K562 (cell line): ENCODE measurements at regions of chr6 and their contacts with region 1.

Region 1: DNA sequence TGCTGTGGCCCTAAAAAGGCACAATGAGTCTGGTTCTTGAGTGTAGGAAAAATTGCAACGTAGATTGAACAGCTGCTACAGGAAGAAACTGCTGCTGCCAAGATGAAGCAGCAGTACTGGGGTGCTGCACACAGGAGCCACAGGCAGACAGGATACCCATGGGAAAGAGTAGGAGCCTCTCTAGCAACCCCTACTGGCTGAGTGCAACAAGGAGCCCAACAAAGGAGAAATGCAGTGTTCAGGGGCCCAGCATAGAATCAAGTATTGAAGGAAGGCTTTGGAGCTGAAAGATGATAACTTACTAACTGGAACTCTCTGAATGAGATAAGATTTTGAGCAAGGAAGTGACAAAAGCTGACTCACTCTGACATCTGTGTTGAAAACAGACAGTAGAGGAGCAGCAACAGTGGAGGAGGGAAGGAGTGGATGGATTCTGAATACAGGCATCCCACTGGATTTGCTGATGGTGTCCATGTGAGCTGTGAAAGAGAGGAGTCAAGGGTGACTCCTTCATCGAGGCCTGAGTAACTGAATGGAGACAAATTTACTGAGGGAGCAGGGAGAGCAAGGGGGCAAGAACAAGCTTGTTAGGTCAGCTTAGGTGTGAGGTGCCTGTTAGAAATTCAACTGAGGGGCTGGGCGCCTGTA is 534.7 kb upstream of the JARID2 start:
- DNase-seq: peak; percentile 71 to 94 (median 82)
- ATAC-seq: peak; percentile 89
- H3K4me3 ChIP-seq: no peak overlapping the region
- H3K27ac ChIP-seq: peak overlapping the region; percentile 91
- H3K4me1 ChIP-seq: peaks cover 28 to 63% of the 10 kb centered on the region in 2 experiments
- H3K27me3 ChIP-seq: no peaks in the 10 kb centered on the region
- CTCF ChIP-seq: peak; percentile 74 to 88 (median 80)
- EP300 ChIP-seq: peak; percentile 97
- POLR2A ChIP-seq: peak; percentile 71
- RAD21 ChIP-seq: peak; percentile 89 to 91

Region 2: DNA sequence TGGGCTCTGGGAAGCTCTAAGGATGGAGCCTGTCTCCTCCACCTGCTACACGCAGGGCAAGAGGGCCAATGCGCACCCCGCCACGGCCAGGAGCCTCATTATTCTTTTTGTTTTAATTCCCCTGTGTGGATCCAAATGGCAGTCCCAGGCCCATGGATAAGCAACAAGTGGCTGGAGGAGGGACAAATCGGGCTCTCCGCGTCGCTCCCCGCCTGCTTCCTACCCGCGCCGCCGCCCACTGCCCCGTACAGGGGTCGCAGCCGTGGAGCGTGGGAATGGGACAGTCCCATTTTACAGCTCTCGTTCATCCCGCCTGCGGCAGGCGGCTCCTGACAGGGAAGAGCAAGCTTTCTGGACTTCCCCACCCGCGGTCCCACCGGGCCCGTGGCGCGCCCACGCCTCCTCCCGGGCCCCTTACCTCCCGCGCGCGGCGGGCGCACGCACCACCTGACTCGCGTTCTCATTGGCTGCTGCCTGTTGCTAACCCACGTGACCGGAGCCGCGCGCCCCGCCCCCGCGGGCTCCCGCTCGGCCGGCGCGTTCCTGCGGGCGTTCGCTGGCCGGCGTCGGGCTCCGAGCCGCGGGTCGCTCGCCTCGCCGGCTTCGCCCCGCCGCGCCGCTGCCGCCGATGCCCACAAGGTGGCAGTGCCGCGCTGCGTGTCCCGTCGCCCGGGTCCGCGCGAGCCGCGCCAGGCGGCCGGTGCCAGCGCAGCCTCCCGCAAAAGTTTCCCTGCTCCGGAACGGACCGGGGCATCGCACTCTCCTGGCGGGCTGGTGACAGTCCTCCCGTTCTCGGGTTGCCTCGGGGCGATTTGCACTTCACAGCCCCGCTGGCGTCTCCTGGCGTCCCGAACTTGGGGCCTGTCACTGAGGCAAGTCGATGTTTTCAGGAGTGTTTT is 500.3 kb before region 1 on chr6:
- CTCF ChIA-PET with region 1: no interaction called
- POLR2A ChIA-PET with region 1: no interaction called
- in situ Hi-C with region 1: no loop called
- intact Hi-C with region 1: loop called (anchors 5 kb)
- DNase-seq: peak; percentile 97 to 100 (median 98)
- ATAC-seq: peak; percentile 99
- H3K4me3 ChIP-seq: peak overlapping the region; percentile 67
- H3K27ac ChIP-seq: 0 out of 3 replicates have a peak overlapping the region, but pooled peaks have one; percentile 49
- H3K4me1 ChIP-seq: peaks cover 13 to 17% of the 10 kb centered on the region in 2 experiments
- H3K27me3 ChIP-seq: peaks cover 4 to 15% of the 10 kb centered on the region in 2 experiments; a peak in 4 of 5 replicates
- CTCF ChIP-seq: peak; percentile 55 to 93 (median 81); a peak in 5 of 6 replicates
- EP300 ChIP-seq: no peak; the same call in 1 of the 2 replicates
- POLR2A ChIP-seq: peak; percentile 72
- RAD21 ChIP-seq: peak; percentile 94 to 98

Region 3: DNA sequence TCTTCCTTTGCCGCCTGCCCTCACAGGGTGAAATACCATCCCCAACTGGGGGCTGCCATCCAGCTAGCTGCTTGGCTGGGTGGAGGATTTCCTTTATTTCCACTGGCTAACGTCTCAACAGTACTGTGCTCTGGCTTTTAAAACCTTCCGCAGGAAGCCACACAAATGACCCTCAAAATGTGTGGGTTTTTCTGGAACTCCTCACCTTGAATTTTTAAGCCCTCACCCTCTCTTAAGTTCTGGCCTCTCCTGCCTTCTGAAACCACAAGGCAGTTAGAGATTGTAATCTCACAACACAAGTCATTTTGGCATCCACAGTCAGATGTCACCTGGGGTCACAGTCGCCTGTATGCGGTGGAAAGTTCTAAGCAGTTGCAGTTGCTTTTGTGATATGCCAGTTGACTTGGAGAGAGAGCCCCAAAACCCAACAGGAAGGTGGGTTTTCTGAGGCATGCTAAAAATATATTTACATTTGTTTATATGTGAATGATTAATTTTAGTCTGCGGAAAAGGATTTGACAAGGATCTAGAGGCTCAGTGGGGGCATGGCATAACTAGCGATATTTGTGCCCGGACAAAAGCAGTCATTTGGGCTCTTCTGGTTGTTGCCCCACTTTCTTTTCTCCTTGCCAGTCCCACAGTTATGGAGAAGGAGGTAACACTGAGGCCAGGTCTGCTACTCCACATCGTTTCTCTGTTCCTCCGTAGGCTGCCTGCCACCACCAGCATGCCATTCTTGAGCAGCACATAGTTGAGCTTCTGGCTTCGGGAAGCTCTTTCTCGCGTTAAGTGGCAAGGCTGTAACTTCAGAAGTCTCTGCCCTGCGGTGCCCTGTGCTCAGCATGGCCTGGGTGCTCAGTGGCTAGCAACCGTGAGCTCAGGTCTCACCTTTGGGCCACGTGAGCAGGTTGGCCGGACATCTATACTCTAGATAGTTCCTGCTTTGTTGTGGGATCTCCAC is 258.3 kb before region 1 on chr6:
- CTCF ChIA-PET with region 1: no interaction called
- POLR2A ChIA-PET with region 1: no interaction called
- in situ Hi-C with region 1: no loop called
- intact Hi-C with region 1: loop called (anchors 5 kb)
- DNase-seq: peak; percentile 40 to 88 (median 62)
- ATAC-seq: peak; percentile 70
- H3K4me3 ChIP-seq: no peak overlapping the region
- H3K27ac ChIP-seq: peak overlapping the region; percentile 77
- H3K4me1 ChIP-seq: peaks cover 38 to 69% of the 10 kb centered on the region in 2 experiments
- H3K27me3 ChIP-seq: no peaks in the 10 kb centered on the region
- CTCF ChIP-seq: no peak
- EP300 ChIP-seq: peak; percentile 98
- POLR2A ChIP-seq: no peak
- RAD21 ChIP-seq: peak; percentile 8 to 40; a peak in 2 of 4 replicates

Region 4: DNA sequence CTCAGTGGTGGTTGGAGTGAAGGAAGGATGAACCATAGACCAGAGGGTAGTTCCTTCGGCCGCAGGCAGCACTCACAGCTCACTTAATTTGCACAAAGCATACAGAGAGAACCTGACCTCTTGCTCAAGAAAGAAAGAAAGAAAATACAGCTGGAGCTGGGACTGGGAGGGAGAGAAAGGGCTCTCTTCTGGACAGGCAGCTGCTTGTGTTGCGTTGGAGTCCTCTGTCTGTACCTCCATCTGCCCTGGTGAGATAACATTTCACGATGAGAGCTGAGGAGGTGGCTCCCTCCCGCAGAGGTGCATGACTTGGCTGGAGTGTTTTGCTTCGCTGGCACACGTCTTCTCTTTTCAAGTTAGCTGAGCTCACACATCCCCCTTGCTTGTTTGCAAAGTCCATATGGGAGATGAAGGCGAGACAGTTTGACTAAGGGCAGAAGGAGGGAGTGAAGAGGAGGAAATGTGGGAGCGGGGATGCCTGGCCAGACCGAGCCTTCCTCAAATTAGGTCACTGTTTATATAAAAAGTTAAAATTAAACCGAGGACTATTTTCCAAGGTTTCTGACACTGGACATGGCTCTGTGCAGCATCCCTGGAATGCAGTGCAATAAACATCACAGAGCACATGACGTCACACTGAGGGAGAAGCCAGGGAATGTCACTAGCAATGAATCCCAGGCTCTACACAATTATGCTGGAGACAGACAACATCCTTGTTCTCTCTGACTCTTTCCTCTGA is 234.2 kb before region 1 on chr6:
- CTCF ChIA-PET with region 1: no interaction called
- POLR2A ChIA-PET with region 1: no interaction called
- in situ Hi-C with region 1: no loop called
- intact Hi-C with region 1: loop called (anchors 5 kb)
- DNase-seq: peak; percentile 94 to 97 (median 96)
- ATAC-seq: peak; percentile 95
- H3K4me3 ChIP-seq: no peak overlapping the region; the same call in 1 of the 2 replicates
- H3K27ac ChIP-seq: peak overlapping the region; percentile 75
- H3K4me1 ChIP-seq: peaks cover 28 to 53% of the 10 kb centered on the region in 2 experiments; a peak in 4 of 5 replicates
- H3K27me3 ChIP-seq: no peaks in the 10 kb centered on the region
- CTCF ChIP-seq: peak in 1 of 3 experiments; percentile 6; a peak in 1 of 6 replicates
- EP300 ChIP-seq: peak; percentile 95
- POLR2A ChIP-seq: no peak
- RAD21 ChIP-seq: peak; percentile 44 to 49

Region 5: DNA sequence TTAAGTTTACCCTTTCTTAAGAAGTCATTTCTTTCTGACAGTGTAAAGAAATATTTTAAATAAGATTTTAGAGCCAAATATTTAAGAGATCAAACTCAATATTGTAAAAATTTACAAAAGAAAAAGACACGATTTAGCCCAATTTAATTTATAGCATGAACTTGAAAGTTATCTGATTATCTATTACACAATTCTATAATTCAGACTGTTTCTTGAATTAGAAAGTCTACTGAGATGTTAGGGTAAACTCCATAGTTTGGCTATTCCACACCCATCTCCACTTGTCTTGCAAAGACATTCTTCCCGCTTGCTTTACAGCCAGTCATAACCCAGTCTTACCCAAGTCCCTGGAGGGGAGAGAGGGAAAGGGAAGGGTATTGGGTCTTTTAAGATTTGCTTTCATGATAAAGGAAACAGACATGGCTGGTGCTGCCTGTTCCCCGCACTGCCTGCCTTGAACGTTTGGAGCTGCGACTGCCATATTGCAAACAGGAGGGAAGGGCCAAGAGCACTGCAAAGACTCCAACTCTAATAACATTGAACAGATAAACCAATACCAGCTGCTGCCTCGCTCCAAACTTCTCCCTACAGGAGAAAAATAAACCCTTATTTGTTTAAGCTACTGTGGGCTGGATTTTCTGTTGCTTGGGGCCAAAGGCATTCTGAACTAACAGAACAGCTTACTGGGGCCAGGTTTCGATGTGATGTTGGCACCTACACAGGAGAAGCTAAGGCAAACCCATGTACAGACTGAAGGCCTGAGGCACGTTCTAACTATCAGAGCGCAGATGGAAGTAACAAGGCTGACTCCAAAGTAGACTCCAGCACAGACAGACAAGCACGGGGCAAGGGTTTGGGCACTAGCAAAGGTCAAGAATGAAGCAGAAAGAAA is 17.6 kb before region 1 on chr6:
- CTCF ChIA-PET with region 1: no interaction called
- POLR2A ChIA-PET with region 1: interaction called, 11 read pairs
- in situ Hi-C with region 1: no loop called
- intact Hi-C with region 1: no loop called
- DNase-seq: peak in 1 of 4 experiments; percentile 64
- ATAC-seq: peak; percentile 80
- H3K4me3 ChIP-seq: no peak overlapping the region
- H3K27ac ChIP-seq: peak overlapping the region; percentile 50; the same call in 2 of the 3 replicates
- H3K4me1 ChIP-seq: peaks cover 4 to 28% of the 10 kb centered on the region in 2 experiments; a peak in 4 of 5 replicates
- H3K27me3 ChIP-seq: no peaks in the 10 kb centered on the region
- CTCF ChIP-seq: no peak
- EP300 ChIP-seq: no peak
- POLR2A ChIP-seq: no peak
- RAD21 ChIP-seq: no peak; a peak in 1 of 4 replicates

Region 6: DNA sequence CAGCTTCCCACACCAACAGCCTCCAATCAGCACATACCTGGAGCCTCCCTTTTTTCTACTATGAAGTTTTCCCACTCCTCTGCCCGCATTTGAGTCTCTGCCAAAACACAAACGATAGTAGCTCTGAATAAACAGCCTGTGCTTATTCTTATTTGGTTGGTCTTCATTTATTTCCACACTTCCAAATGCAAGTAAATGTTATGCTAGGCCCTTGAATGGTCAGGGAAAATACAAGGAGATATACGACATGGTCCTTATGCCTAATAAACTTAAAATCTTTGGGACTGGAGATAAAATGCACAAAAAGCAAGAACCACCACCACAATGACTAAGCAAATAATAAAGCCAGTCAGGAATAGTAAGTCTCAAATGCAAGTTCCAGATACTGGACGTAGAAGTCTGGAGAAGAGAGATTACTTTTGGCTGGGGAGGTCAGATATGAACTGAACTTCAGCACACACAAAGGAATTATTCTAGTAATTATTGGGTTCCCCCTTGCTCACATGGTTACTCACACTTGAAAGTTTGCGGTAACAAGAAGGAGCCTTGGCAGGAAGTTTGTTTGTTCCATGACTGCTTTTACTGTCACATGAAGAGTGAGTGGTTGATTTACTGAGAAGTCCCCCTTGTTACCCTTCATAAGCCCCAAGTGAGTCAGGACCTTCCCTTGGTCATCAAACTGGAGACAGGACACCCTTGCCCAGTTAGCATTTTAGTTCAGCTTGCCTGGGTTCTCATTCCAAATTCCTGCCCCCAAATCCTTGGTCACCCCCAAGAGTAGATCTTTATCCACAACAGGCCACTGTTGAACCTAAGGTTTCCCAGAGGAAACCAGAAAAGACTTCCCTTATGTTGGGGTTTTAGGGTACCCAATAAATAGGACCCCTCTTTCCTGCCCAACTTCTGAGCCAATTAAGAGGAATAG is 23.5 kb after region 1 on chr6:
- CTCF ChIA-PET with region 1: no interaction called
- POLR2A ChIA-PET with region 1: no interaction called
- in situ Hi-C with region 1: no loop called
- intact Hi-C with region 1: loop called (anchors 2 kb)
- DNase-seq: peak; percentile 70 to 95 (median 78)
- ATAC-seq: peak; percentile 90
- H3K4me3 ChIP-seq: no peak overlapping the region
- H3K27ac ChIP-seq: peak overlapping the region; percentile 93
- H3K4me1 ChIP-seq: peaks cover 6 to 64% of the 10 kb centered on the region in 2 experiments; a peak in 4 of 5 replicates
- H3K27me3 ChIP-seq: no peaks in the 10 kb centered on the region
- CTCF ChIP-seq: no peak
- EP300 ChIP-seq: peak; percentile 99
- POLR2A ChIP-seq: no peak
- RAD21 ChIP-seq: peak; percentile 42 to 48

Region 7: DNA sequence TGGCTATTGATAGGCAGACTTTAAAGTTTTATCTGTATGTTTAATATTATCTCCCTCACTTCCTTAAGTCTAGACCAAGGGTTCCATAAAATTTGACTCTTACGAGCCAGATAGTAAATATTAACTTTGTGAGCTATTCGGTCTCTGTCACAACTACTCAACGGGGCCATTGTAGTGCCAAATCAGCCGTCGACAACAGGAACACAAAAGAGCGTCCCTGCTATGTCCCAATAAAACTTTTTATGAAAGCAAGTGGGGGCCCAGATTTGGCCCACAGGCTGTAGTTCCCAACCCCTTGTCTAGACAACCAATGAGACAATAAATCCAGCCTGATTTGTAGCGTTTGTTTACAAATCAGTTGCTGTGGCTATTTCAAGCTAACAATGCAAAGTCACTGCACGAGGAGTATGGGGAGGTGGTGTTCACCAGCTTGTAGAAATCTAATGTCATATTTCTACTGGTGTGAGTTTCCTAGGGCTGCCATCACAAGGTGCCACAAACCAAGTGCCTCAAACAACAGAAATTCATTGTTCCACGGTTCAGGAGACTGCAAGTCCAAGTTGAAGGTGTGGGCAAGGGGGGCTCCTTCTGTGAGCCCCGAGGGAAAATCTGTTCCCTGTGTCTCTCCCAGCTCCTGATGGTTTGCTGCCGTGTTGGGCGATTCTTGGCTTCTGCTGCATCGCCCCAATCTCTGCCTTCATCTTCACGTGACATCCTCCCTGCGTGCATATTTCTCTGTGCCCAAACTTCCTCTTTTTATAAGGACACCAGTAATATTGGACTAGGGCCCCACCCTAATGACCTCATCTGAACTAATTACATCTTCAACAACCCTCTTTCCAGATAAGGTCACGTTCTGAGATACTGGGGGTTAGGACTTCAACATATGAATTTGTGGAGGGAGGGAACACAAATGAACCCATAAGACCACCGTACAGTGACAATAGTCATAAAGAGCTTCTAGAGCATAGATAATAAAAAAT is 178.7 kb after region 1 on chr6:
- CTCF ChIA-PET with region 1: no interaction called
- POLR2A ChIA-PET with region 1: no interaction called
- in situ Hi-C with region 1: no loop called
- intact Hi-C with region 1: no loop called
- DNase-seq: peak in 1 of 4 experiments; percentile 55
- ATAC-seq: peak; percentile 79
- H3K4me3 ChIP-seq: no peak overlapping the region
- H3K27ac ChIP-seq: no peak overlapping the region
- H3K4me1 ChIP-seq: peaks cover 0 to 7% of the 10 kb centered on the region in 2 experiments; a peak in 2 of 5 replicates
- H3K27me3 ChIP-seq: no peaks in the 10 kb centered on the region
- CTCF ChIP-seq: no peak
- EP300 ChIP-seq: peak; percentile 54; the same call in 1 of the 2 replicates
- POLR2A ChIP-seq: no peak
- RAD21 ChIP-seq: peak; percentile 8 to 28; a peak in 2 of 4 replicates